ENCODE measurements at regions of chr2 and their contacts with region 1.

Region 1: DNA sequence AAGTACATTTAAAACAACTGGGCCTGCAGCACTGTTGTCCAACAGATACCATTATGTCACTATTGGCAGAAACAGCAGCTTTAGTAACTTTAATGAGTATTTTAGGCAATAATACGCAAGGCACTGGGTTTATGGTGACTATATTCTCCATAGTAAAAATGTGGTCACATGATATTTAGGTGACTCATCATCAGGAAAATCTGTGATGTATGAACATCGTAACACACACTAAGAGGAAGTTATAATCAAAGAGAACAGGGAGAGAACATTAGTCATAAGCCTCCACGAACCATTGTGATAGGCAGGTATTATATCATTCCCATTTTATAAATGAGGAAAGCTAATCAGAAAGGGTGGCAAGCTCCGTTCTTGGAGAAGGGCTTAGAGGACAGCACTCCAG is 36.9 kb downstream of the RAPH1 start:
- DNase-seq: no peak
- H3K4me3 Mint-ChIP-seq: peak overlapping the region; percentile 35
- H3K27ac Mint-ChIP-seq: peak overlapping the region; percentile 45
- H3K4me1 Mint-ChIP-seq: peaks cover 53% of the 10 kb centered on the region
- H3K27me3 Mint-ChIP-seq: no peaks in the 10 kb centered on the region
- CTCF ChIP-seq: no peak

Region 2: GRCh38 chr2:203463266-203463678 is 34.9 kb before region 1 on chr2:
- CTCF ChIA-PET with region 1: interaction called, 4 read pairs
- intact Hi-C with region 1: loop called (anchors 1 kb)
- DNase-seq: no peak
- H3K4me3 Mint-ChIP-seq: no peak overlapping the region
- H3K27ac Mint-ChIP-seq: no peak overlapping the region
- H3K4me1 Mint-ChIP-seq: peaks cover 2% of the 10 kb centered on the region
- H3K27me3 Mint-ChIP-seq: no peaks in the 10 kb centered on the region
- CTCF ChIP-seq: no peak

Region 3: DNA sequence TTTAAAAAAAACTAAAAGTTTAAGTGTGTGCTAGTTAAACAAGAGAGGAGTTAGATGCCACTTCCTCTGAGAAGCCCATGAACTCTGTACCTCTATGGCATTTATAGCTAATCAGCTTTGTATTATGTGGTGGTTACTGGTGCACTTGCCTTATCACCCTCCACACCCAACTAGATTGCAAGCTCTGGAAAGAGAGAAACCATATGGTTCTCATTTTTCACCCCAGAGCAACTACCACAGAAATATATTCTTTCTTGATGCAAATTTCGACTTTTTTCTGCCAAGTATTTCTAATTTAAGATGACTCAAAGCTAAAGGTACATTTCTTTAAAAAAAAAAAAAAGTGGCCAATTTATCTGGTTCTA is 12.8 kb after region 1 on chr2:
- CTCF ChIA-PET with region 1: interaction called, 10 read pairs
- intact Hi-C with region 1: no loop called
- DNase-seq: no peak
- H3K4me3 Mint-ChIP-seq: peak overlapping the region; percentile 62
- H3K27ac Mint-ChIP-seq: peak overlapping the region; percentile 85
- H3K4me1 Mint-ChIP-seq: peaks cover 35% of the 10 kb centered on the region
- H3K27me3 Mint-ChIP-seq: no peaks in the 10 kb centered on the region
- CTCF ChIP-seq: no peak

Region 4: GRCh38 chr2:203759690-203760365 is 261.7 kb after region 1 on chr2:
- CTCF ChIA-PET with region 1: no interaction called
- intact Hi-C with region 1: no loop called
- DNase-seq: peak; percentile 74
- H3K4me3 Mint-ChIP-seq: peak overlapping the region; percentile 31
- H3K27ac Mint-ChIP-seq: peak overlapping the region; percentile 97
- H3K4me1 Mint-ChIP-seq: peaks cover 34% of the 10 kb centered on the region
- H3K27me3 Mint-ChIP-seq: no peaks in the 10 kb centered on the region
- CTCF ChIP-seq: no peak